ENCODE measurements at regions of chr4 and their contacts with region 1.

Region 1: GRCh38 chr4:77819843-77820648 is 878 bp upstream of the CNOT6L start:
- DNase-seq: peak; percentile 99
- H3K4me3 ChIP-seq: peak overlapping the region; percentile 52 to 86 (median 78)
- H3K27ac ChIP-seq: peak overlapping the region; percentile 98 to 100 (median 100)
- H3K4me1 ChIP-seq: peaks cover 13 to 69% (median 60%) of the 10 kb centered on the region in 6 donors
- H3K27me3 ChIP-seq: no peaks in the 10 kb centered on the region
- CTCF ChIP-seq: no peak
- POLR2A ChIP-seq: peak; percentile 53 to 76 (median 74)

Region 2: GRCh38 chr4:77862478-77863216 is 42.6 kb after region 1 on chr4 and contains the start of gene MRPL1:
- intact Hi-C with region 1: loop called (anchors 5 kb)
- DNase-seq: peak; percentile 94
- H3K4me3 ChIP-seq: peak within 1 kb of the TSS; percentile 56 to 78 (median 75)
- H3K27ac ChIP-seq: peak within 1 kb of the TSS; percentile 92 to 99 (median 96)
- H3K4me1 ChIP-seq: peaks cover 9 to 67% (median 36%) of the 10 kb centered on the region in 6 donors
- H3K27me3 ChIP-seq: no peaks in the 10 kb centered on the region
- CTCF ChIP-seq: peak in 2 of 11 experiments; percentile 1 to 19
- POLR2A ChIP-seq: peak in 2 of 3 donors; percentile 46 to 69
- total RNA-seq, gene MRPL1: 14.4 to 32.8 (median 23.6) TPM